Natural killer cell (primary cell): ENCODE measurements at regions of chr19 and their contacts with region 1.

Region 1: DNA sequence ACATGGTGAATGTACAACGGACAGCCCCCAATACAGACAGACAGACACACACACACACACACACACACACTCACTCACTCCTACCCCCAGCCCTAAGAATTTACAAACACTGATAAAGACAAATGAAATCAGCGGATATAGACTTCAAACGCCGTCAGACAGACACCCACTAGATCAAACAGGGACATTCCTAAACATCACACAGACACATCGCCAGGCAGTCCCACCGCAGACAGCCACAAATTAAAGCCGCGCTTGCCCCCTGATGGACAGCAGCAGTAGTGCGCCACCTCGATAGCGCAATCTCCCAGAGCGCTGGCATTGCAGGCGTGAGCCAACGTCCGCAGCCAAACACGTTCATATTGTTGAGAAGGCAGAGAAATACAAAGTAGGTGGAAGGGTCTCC is 24.7 kb upstream of the ADGRE1 start:
- DNase-seq: peak; percentile 90 to 96
- ATAC-seq: peak; percentile 86 to 95 (median 88)
- H3K4me3 ChIP-seq: peak overlapping the region; percentile 40
- H3K4me3 Mint-ChIP-seq: peak overlapping the region; percentile 88
- H3K27ac ChIP-seq: peak overlapping the region; percentile 73
- H3K27ac Mint-ChIP-seq: peak overlapping the region; percentile 87 to 93
- H3K4me1 ChIP-seq: peaks cover 13% of the 10 kb centered on the region
- H3K4me1 Mint-ChIP-seq: peaks cover 13 to 19% of the 10 kb centered on the region in 2 donors
- H3K27me3 ChIP-seq: no peaks in the 10 kb centered on the region
- H3K27me3 Mint-ChIP-seq: no peaks in the 10 kb centered on the region
- CTCF ChIP-seq: peak; percentile 57

Region 2: GRCh38 chr19:6066661-6067646 is 795.7 kb before region 1 on chr19:
- intact Hi-C with region 1: no loop called
- DNase-seq: peak; percentile 14 to 69
- ATAC-seq: no peak
- H3K4me3 ChIP-seq: no peak overlapping the region
- H3K4me3 Mint-ChIP-seq: peak overlapping the region; percentile 2
- H3K27ac ChIP-seq: peak overlapping the region; percentile 73
- H3K27ac Mint-ChIP-seq: peak overlapping the region; percentile 76 to 82
- H3K4me1 ChIP-seq: peaks cover 26% of the 10 kb centered on the region
- H3K4me1 Mint-ChIP-seq: peaks cover 36 to 46% of the 10 kb centered on the region in 2 donors
- H3K27me3 ChIP-seq: no peaks in the 10 kb centered on the region
- H3K27me3 Mint-ChIP-seq: peaks cover 15 to 29% of the 10 kb centered on the region in 2 donors
- CTCF ChIP-seq: no peak

Region 3: DNA sequence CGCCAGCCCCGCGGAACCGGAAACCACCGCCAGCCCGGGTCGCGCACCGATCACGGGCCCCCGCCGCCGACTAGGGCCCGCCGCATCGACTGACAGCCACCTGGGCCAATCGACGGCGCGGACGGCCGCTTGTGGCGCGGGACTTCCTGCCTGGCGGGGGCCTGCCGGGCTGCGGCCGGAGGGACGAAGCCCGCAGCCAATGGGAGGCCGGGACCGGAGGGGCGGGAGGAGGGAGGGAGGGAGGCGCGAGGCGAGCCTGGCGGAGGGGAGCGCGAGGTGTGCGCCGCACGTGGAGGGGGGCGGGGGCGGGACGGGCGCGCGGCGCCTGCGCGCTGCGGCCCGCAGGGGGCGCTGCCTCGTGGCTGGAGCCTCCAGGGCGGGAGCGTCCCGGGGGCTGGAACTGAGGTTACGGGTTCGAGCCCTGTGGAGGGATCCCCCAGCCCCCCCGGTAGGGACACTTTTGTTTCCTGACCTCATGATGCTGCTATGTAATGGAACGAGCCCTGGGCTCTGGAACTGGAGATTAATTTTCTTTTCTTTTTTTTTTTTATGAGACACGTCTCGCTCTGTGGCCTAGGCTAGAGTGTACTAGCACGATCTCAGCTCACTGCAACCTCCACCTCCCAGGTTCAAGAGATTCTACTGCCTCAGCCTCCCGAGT is 582.6 kb before region 1 on chr19 and contains the start of gene MLLT1:
- intact Hi-C with region 1: loop called (anchors 2 kb)
- DNase-seq: peak; percentile 95 to 96
- ATAC-seq: peak; percentile 94 to 96 (median 95)
- H3K4me3 ChIP-seq: peak within 1 kb of the TSS; percentile 54
- H3K4me3 Mint-ChIP-seq: peak within 1 kb of the TSS; percentile 95
- H3K27ac ChIP-seq: peak within 1 kb of the TSS; percentile 62
- H3K27ac Mint-ChIP-seq: peak within 1 kb of the TSS; percentile 89 to 91
- H3K4me1 ChIP-seq: peaks cover 44% of the 10 kb centered on the region
- H3K4me1 Mint-ChIP-seq: peaks cover 33 to 40% of the 10 kb centered on the region in 2 donors
- H3K27me3 ChIP-seq: no peaks in the 10 kb centered on the region
- H3K27me3 Mint-ChIP-seq: no peaks in the 10 kb centered on the region
- CTCF ChIP-seq: peak; percentile 87
- total RNA-seq, gene MLLT1: 30.2 to 43.8 (median 36.6) TPM

Region 4: DNA sequence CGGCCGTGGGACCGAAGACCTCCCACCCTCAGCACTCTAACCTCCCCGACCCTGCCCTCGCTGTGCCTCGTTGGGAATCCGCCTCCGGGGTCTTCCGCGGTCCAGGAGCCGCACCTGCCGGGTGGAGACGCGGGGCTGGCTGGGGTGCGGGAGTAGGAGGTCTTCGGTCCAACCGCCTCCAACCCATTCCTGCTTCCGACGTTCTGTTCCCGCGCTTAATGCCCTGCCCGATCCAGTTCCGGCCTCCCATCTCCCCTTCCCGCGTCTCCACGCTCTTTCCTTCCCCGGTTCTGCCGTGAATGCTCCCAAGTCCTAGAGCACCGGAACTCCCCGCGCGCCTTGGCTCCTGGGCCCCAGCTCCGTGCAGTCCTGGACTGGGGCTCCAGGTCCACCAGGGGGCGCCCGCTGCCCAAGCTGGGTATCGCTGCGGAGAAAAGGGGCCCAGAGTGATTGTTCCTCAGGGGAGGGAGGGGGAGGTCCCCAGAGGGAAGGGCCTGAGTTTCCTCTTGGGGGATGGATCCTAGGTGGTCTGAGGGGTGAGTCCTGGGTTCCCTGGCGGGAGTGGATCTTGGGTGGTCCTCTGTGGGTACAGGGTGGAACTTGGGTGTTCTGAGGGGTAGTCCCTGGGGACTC is 345.9 kb before region 1 on chr19:
- intact Hi-C with region 1: loop called (anchors 1 kb)
- DNase-seq: peak; percentile 93 to 94
- ATAC-seq: peak; percentile 84 to 89 (median 86)
- H3K4me3 ChIP-seq: peak overlapping the region; percentile 89
- H3K4me3 Mint-ChIP-seq: peak overlapping the region; percentile 95
- H3K27ac ChIP-seq: no peak overlapping the region
- H3K27ac Mint-ChIP-seq: peak overlapping the region; percentile 67 to 97
- H3K4me1 ChIP-seq: peaks cover 36% of the 10 kb centered on the region
- H3K4me1 Mint-ChIP-seq: peaks cover 29 to 36% of the 10 kb centered on the region in 2 donors
- H3K27me3 ChIP-seq: no peaks in the 10 kb centered on the region
- H3K27me3 Mint-ChIP-seq: no peaks in the 10 kb centered on the region
- CTCF ChIP-seq: peak; percentile 92

Region 5: DNA sequence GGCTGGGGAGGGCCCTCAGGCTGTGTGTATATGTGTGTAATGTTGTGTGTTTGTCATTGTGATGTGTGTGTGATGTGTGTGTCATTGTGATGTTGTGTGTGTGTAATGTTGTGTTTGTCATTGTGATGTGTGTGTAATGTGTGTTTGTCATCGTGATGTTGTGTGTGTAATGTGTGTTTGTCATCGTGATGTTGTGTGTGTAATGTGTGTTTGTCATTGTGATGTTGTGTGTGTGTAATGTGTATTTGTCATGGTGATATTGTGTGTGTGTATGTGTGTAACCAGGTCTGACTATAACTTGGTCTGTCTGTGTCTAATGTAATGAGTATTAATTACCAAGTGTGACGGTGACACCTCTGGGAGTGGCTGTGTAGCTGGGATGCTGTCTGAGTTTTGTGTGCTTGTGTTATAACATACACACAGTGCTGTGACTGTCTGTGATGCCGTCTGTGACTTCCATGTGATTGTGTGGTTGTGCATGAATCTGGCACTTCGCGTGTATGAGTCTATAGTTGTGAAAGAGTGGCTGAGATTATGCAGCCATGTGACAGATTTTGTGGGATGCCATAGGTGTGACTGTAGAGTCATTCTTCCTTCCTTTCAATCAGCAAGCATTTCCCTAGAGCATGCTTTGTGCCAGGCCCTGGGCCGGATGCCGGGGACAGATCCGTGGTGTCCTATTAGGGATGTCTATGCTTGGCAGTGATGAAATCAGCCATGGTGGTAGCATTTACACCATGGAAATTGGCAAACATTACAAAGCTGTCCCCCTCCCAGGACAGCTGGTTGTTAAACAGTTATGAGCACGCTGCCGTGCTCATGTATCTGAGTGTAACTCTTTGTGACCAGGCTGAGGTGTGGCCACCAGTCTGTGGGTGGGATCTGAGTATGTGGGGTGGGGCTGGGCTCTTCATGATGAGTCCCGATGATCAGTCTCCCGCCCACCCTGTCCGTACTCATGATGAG is 199.2 kb before region 1 on chr19:
- intact Hi-C with region 1: no loop called
- DNase-seq: peak; percentile 56 to 77
- ATAC-seq: peak; percentile 69 to 83 (median 69)
- H3K4me3 ChIP-seq: no peak overlapping the region
- H3K4me3 Mint-ChIP-seq: no peak overlapping the region
- H3K27ac ChIP-seq: peak overlapping the region; percentile 66
- H3K27ac Mint-ChIP-seq: no peak overlapping the region
- H3K4me1 ChIP-seq: peaks cover 92% of the 10 kb centered on the region
- H3K4me1 Mint-ChIP-seq: peaks cover 36 to 46% of the 10 kb centered on the region in 2 donors
- H3K27me3 ChIP-seq: no peaks in the 10 kb centered on the region
- H3K27me3 Mint-ChIP-seq: no peaks in the 10 kb centered on the region
- CTCF ChIP-seq: no peak

Region 6: DNA sequence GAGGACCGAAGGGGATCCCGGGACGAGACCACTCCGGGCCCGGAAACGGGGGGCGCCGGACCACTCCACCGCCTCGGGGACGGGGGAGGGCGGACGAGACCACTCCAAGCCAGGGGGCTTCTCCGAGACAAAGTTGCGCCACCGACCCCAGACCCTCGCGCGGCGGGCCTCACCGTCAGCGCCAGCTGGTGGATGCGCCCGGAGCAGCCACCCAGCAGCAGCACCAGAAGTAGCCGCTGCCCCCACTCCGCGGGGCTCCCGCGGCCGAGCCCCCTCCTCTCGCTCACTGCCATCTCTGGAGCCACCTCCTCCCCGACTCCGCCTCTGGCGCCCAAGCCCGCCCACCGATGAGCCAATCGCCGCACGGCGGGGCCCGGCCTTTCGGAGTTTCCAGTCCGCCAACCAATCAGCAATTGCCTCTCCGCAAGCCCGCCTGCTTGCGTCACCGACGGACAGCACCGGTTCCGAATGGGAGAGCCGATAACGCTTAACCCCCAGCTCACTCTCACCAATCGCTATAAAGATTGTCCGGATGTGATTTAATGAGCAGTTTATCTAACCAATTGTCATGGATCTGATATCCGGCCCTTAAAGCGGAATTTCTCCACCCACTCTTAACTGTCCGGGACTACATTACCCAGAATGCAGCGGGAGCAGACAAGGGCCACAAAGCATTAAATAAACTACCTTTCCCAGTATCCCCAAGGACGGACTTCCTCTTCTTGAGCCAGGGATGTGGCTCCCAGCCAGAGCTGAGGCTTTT is 125.2 kb before region 1 on chr19 and contains the start of gene GPR108:
- intact Hi-C with region 1: loop called (anchors 1 kb)
- DNase-seq: peak; percentile 99
- ATAC-seq: peak; percentile 70 to 89 (median 77)
- H3K4me3 ChIP-seq: peak within 1 kb of the TSS; percentile 80
- H3K4me3 Mint-ChIP-seq: peak within 1 kb of the TSS; percentile 96
- H3K27ac ChIP-seq: peak within 1 kb of the TSS; percentile 94
- H3K27ac Mint-ChIP-seq: peak within 1 kb of the TSS; percentile 98
- H3K4me1 ChIP-seq: peaks cover 53% of the 10 kb centered on the region
- H3K4me1 Mint-ChIP-seq: peaks cover 29 to 41% of the 10 kb centered on the region in 2 donors
- H3K27me3 ChIP-seq: no peaks in the 10 kb centered on the region
- H3K27me3 Mint-ChIP-seq: no peaks in the 10 kb centered on the region
- CTCF ChIP-seq: no peak
- total RNA-seq, gene GPR108: 66.1 to 78.0 (median 76.9) TPM

Region 7: GRCh38 chr19:6801485-6802086 is 61.1 kb before region 1 on chr19:
- intact Hi-C with region 1: loop called (anchors 1 kb)
- DNase-seq: peak; percentile 69 to 94
- ATAC-seq: peak; percentile 45 to 65 (median 49)
- H3K4me3 ChIP-seq: peak overlapping the region; percentile 43
- H3K4me3 Mint-ChIP-seq: peak overlapping the region; percentile 99
- H3K27ac ChIP-seq: peak overlapping the region; percentile 84
- H3K27ac Mint-ChIP-seq: peak overlapping the region; percentile 97 to 99
- H3K4me1 ChIP-seq: peaks cover 54% of the 10 kb centered on the region
- H3K4me1 Mint-ChIP-seq: peaks cover 59 to 61% of the 10 kb centered on the region in 2 donors
- H3K27me3 ChIP-seq: no peaks in the 10 kb centered on the region
- H3K27me3 Mint-ChIP-seq: no peaks in the 10 kb centered on the region
- CTCF ChIP-seq: no peak